ENCODE measurements at regions of chr1 and their contacts with region 1.

Region 1: GRCh38 chr1:216310776-216311175 is 112.5 kb downstream of the USH2A start:
- DNase-seq: peak; percentile 5
- H3K4me3 ChIP-seq: no peak overlapping the region
- H3K27ac ChIP-seq: no peak overlapping the region
- H3K4me1 ChIP-seq: no peaks in the 10 kb centered on the region
- CTCF ChIP-seq: peak; percentile 76

Region 2: DNA sequence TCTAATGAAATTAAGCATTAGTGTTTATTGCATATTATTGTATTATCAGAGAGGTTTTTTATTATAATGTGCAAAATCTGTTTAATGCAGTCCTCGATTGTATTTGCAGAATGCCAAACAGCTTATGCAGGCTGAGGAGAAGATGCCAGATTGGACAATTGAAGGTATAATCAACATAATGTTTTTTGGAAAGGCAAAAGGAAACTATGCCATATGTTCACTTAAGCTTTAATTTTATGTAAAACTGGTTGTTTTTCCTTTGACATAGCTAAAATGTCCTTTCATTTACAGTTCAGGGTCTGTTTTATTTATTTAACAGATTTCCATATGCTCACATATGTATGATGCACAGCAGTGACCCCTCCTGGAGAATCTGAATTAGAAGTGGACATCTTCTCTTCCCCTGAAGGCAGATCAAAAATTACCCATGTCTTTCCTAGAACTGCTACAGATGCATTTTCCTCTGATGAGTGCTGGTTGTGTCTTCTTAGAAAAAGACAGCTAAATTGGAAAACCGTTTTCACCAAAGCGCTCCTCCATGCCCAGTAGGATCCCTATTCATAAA is 255.9 kb after region 1 on chr1:
- CTCF ChIA-PET with region 1: no interaction called
- POLR2A ChIA-PET with region 1: no interaction called
- intact Hi-C with region 1: loop called (anchors 5 kb)
- DNase-seq: no peak
- H3K4me3 ChIP-seq: no peak overlapping the region
- H3K27ac ChIP-seq: no peak overlapping the region
- H3K4me1 ChIP-seq: no peaks in the 10 kb centered on the region
- CTCF ChIP-seq: peak; percentile 55

Region 3: DNA sequence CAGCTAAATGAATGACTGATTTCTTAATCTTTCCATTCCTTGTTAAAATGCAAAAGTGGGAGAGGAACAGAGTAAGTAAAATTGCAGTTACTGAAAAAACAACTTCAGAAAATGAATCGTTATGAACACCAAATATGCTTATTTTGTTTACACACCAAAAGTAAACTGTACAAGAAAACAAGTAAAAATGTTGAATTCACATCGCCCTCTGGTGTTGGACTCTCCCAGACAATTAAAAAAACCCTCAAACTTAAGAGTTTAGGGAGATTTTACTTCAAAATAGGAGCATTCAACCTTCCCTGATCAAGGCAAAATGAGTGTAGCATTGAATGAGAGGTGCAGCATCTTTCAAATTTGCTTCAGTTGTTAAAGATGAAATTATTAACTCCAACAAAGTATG is 431.8 kb after region 1 on chr1:
- CTCF ChIA-PET with region 1: no interaction called
- POLR2A ChIA-PET with region 1: no interaction called
- intact Hi-C with region 1: loop called (anchors 5 kb)
- DNase-seq: no peak
- H3K4me3 ChIP-seq: no peak overlapping the region
- H3K27ac ChIP-seq: no peak overlapping the region
- H3K4me1 ChIP-seq: no peaks in the 10 kb centered on the region
- CTCF ChIP-seq: peak; percentile 63

Region 4: GRCh38 chr1:217211486-217211885 is 900.7 kb after region 1 on chr1:
- CTCF ChIA-PET with region 1: no interaction called
- POLR2A ChIA-PET with region 1: no interaction called
- intact Hi-C with region 1: loop called (anchors 10 kb)
- DNase-seq: no peak
- H3K4me3 ChIP-seq: no peak overlapping the region
- H3K27ac ChIP-seq: no peak overlapping the region
- H3K4me1 ChIP-seq: no peaks in the 10 kb centered on the region
- CTCF ChIP-seq: no peak